Activated CD8-positive, alpha-beta T cell treated with anti-CD3 and anti-CD28 coated beads, Interleukin-2, amount 10 ng/mL, durations not matched to agents 7 days and 5 days (primary cell): ENCODE measurements at regions of chr11 and their contacts with region 1.

Region 1: GRCh38 chr11:112113539-112114457 is 27.1 kb downstream of the SDHD start:
- DNase-seq: no peak
- ATAC-seq: peak; percentile 74
- H3K4me3 Mint-ChIP-seq: no peak overlapping the region
- H3K27ac Mint-ChIP-seq: no peak overlapping the region
- H3K4me1 Mint-ChIP-seq: peaks cover 32% of the 10 kb centered on the region
- H3K27me3 Mint-ChIP-seq: no peaks in the 10 kb centered on the region

Region 2: DNA sequence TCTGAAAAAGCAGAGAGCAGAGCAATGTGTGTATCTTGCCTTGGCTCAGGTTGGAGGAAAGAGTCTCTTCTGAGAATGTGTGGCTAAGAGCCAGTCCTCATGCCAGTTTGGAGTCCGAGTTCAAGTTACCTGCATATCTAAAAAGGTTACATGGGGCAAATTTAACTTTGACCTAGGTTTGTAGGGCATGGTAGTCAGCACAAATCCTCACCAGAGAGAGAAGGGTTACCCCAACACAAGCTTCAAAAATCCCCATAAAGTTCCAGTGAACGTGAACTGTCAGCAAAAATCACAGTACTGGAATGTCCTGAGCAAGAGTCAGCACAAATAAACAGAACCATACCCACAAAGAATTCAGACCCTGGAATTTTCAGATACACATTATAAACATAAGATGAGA is 13.3 kb before region 1 on chr11:
- CTCF ChIA-PET with region 1: interaction called, 42 read pairs
- POLR2A ChIA-PET with region 1: interaction called, 3 read pairs
- DNase-seq: no peak
- ATAC-seq: no peak
- H3K4me3 Mint-ChIP-seq: no peak overlapping the region
- H3K27ac Mint-ChIP-seq: no peak overlapping the region
- H3K4me1 Mint-ChIP-seq: no peaks in the 10 kb centered on the region
- H3K27me3 Mint-ChIP-seq: no peaks in the 10 kb centered on the region

Region 3: GRCh38 chr11:112174789-112175598 is 61.2 kb after region 1 on chr11 and contains the start of gene BCO2:
- CTCF ChIA-PET with region 1: interaction called, 13 read pairs
- POLR2A ChIA-PET with region 1: no interaction called
- DNase-seq: peak; percentile 65
- ATAC-seq: peak; percentile 84
- H3K4me3 Mint-ChIP-seq: peak within 1 kb of the TSS; percentile 44
- H3K27ac Mint-ChIP-seq: no peak within 1 kb of the TSS
- H3K4me1 Mint-ChIP-seq: peaks cover 19% of the 10 kb centered on the region
- H3K27me3 Mint-ChIP-seq: peaks cover 23% of the 10 kb centered on the region
- total RNA-seq, gene BCO2: 1.3 to 1.9 TPM